Naive thymus-derived CD4-positive, alpha-beta T cell (primary cell): ENCODE measurements at regions of chr19 and their contacts with region 1.

Region 1: GRCh38 chr19:50025024-50025789 is at the start of gene VRK3:
- DNase-seq: peak; percentile 93 to 100 (median 99)
- ATAC-seq: peak; percentile 91
- H3K4me3 ChIP-seq: peak within 1 kb of the TSS; percentile 85
- H3K4me3 Mint-ChIP-seq: peak within 1 kb of the TSS; percentile 93 to 99 (median 94)
- H3K27ac ChIP-seq: peak within 1 kb of the TSS; percentile 96
- H3K27ac Mint-ChIP-seq: peak within 1 kb of the TSS; percentile 98 to 100 (median 99)
- H3K4me1 ChIP-seq: peaks cover 19 to 29% of the 10 kb centered on the region in 2 donors
- H3K4me1 Mint-ChIP-seq: peaks cover 30 to 73% (median 58%) of the 10 kb centered on the region in 7 donors
- H3K27me3 ChIP-seq: no peaks in the 10 kb centered on the region
- H3K27me3 Mint-ChIP-seq: peaks cover 0 to 6% (median 0%) of the 10 kb centered on the region in 5 donors
- total RNA-seq, gene VRK3: 70.6 to 121 (median 84.7) TPM

Region 2: DNA sequence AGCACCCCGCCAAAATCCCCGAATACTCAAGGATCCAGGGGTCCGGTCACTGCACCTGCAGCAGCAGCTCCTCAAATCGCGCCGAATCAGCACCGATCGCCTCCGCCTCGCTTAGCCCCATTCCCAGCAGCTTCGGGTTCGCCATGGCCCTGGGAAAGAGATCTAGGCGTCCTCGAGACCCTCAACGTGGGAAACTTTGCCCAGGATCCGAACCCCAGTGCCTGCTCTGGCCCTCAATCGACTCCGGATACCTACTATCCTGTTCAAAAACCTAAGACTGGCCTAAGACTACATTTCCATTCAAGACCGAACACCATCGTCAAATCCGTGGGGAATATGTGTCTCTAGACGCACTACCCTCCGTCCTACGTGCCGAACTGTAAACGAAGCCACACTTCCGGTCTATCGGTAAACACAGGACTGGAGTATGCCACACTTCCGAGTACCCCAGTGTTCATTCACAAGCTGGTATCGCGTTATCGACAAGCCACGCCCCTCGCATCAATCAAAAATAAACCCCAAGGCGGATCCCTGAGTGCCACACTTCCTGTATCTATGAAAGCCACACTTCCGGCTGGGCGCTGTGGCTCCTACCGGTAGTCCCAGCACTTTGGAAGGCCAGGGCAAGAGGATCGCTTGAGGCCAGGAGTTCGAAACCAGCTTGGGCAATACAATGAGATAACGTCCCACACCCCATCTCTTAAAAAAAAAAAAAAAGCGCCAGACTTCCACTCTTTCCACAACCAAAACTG is 573.6 kb before region 1 on chr19 and contains the start of gene PIH1D1:
- CTCF ChIA-PET with region 1: no interaction called
- POLR2A ChIA-PET with region 1: no interaction called
- intact Hi-C with region 1: loop called in 1 of 2 experiments (anchors 5 kb)
- DNase-seq: peak; percentile 69 to 97 (median 94)
- ATAC-seq: peak; percentile 71
- H3K4me3 ChIP-seq: peak within 1 kb of the TSS; percentile 85
- H3K4me3 Mint-ChIP-seq: peak within 1 kb of the TSS; percentile 95 to 100 (median 99)
- H3K27ac ChIP-seq: peak within 1 kb of the TSS; percentile 95
- H3K27ac Mint-ChIP-seq: peak within 1 kb of the TSS; percentile 92 to 100 (median 99)
- H3K4me1 ChIP-seq: peaks cover 15 to 26% of the 10 kb centered on the region in 2 donors
- H3K4me1 Mint-ChIP-seq: peaks cover 31 to 68% (median 55%) of the 10 kb centered on the region in 7 donors
- H3K27me3 ChIP-seq: no peaks in the 10 kb centered on the region
- H3K27me3 Mint-ChIP-seq: no peaks in the 10 kb centered on the region
- total RNA-seq, gene PIH1D1: 136 to 183 (median 159) TPM

Region 3: DNA sequence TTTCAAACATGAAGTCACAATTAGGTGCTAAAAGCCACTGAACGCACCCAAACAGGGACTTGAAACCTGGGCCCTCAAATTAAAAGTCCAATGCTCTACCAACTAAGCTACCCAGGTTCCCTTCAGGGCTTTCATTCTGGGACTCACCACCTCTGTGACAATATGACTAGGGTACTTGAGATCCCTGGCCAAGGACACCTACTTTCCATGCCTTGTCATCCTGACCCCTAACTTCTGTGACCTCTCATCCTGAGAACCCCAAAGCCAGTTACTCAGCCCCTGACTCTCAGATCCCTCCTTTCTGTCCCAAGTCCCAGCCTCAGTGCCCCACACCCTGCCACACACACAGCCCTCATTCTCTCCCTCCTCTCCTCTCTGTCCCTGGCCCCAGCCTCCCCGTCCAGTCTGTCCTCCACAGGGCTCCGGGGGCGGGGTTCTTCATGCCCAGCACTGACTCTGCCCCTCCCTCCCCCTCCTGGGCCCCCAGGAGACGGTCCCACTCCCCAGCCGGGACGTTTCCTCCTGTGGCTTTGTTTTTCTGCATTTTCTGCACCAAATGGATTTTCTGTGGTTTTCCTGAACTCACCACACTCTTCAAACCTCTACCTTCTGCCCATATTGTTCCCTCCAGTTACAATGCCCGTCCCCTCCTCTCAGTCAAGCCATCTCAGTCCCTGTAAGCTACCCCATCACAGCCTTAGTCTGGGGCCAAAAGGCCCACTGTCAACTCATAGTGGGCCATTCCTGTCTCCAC is 490.4 kb before region 1 on chr19:
- CTCF ChIA-PET with region 1: no interaction called
- POLR2A ChIA-PET with region 1: no interaction called
- intact Hi-C with region 1: no loop called
- DNase-seq: peak in 1 of 9 donors; percentile 32
- ATAC-seq: no peak
- H3K4me3 ChIP-seq: peak overlapping the region; percentile 58
- H3K4me3 Mint-ChIP-seq: peak overlapping the region; percentile 77 to 95 (median 91)
- H3K27ac ChIP-seq: peak overlapping the region; percentile 66
- H3K27ac Mint-ChIP-seq: peak overlapping the region; percentile 41 to 95 (median 72)
- H3K4me1 ChIP-seq: peaks cover 12 to 21% of the 10 kb centered on the region in 2 donors
- H3K4me1 Mint-ChIP-seq: peaks cover 19 to 28% (median 22%) of the 10 kb centered on the region in 7 donors
- H3K27me3 ChIP-seq: no peaks in the 10 kb centered on the region
- H3K27me3 Mint-ChIP-seq: peaks cover 0 to 2% (median 0%) of the 10 kb centered on the region in 5 donors

Region 4: DNA sequence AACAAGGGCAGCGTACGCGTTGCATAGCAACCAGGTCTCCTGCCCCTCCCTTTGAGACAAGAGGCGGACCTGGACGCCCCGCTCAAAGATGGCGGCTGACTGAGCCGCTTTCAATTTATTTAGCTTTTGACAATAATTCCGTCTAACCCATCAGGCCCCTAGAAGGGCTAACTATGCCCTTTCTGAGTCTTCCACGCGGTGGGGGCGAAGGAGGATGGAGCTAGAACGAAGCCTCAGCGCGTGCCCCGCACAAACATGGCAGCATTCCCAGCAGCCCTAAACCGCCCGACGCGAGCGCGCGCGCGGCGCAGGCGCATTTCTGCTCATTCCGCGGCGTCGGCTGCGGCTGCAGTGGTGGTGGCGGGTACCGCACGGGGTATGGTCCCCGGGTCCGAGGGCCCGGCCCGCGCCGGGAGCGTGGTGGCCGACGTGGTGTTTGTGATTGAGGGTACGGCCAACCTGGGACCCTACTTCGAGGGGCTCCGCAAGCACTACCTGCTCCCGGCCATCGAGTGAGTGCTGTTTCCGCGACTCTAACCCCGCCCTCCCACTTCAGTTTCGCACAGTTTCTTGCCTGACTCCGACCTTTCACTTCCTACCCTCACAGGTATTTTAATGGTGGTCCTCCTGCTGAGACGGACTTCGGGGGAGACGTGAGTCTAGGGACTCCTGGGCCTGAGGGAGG is 207.1 kb before region 1 on chr19 and contains the start of gene MED25:
- CTCF ChIA-PET with region 1: no interaction called
- POLR2A ChIA-PET with region 1: no interaction called
- intact Hi-C with region 1: loop called (anchors 1 kb)
- DNase-seq: peak; percentile 87 to 96 (median 94)
- ATAC-seq: peak; percentile 65
- H3K4me3 ChIP-seq: peak within 1 kb of the TSS; percentile 91
- H3K4me3 Mint-ChIP-seq: peak within 1 kb of the TSS; percentile 94 to 100 (median 98)
- H3K27ac ChIP-seq: peak within 1 kb of the TSS; percentile 88
- H3K27ac Mint-ChIP-seq: peak within 1 kb of the TSS; percentile 96 to 100 (median 100)
- H3K4me1 ChIP-seq: peaks cover 11 to 17% of the 10 kb centered on the region in 2 donors
- H3K4me1 Mint-ChIP-seq: peaks cover 20 to 51% (median 39%) of the 10 kb centered on the region in 7 donors
- H3K27me3 ChIP-seq: no peaks in the 10 kb centered on the region
- H3K27me3 Mint-ChIP-seq: no peaks in the 10 kb centered on the region
- total RNA-seq, gene MED25: 36.8 to 75.2 (median 55.4) TPM

Region 5: DNA sequence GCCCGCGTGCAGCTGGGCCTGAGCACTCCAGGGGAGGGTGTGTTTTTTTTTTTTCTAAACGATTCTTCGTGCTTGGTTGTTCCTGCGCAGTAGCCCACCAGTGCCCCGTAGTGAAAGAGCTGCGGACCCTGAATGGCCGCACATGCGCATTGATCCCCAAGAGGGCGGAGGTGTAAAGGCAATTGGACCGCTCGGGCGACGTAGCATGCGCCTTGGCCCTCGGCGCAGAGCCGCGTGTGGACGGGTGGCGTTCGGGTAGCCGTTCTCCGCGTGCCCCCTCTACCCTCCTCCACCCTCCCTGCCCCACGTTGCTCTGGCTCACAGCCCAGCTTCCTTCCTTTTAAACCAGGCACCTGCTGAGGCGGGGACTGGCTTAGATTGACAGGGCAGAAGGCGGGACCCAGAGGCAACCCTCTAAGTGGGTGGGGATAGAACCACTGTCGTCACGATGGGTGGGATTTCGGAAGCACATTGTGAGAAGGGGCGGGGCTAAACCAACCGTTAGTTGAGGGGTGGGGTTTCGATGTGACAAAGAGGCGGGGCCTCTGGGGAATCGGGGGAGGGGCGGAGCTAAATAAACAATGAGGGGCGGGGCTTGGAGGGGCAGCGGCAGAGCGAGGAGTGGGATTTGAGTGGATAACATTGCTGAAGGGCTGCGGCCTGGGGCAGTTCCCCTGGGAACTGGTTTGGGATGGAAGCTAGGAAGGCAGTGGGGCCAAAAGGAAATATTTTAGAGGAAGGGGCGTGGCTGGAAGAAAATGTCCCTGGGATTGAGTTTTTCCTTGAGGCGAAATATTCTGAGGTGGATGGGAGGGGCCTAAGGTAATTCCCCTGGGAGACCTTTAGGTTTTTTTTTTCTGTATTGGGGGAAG is 95.4 kb before region 1 on chr19:
- CTCF ChIA-PET with region 1: no interaction called
- POLR2A ChIA-PET with region 1: interaction called, 7 read pairs
- intact Hi-C with region 1: loop called (anchors 1 kb)
- DNase-seq: peak in 8 of 9 donors; percentile 88 to 97 (median 96)
- ATAC-seq: peak; percentile 92
- H3K4me3 ChIP-seq: peak overlapping the region; percentile 100
- H3K4me3 Mint-ChIP-seq: peak overlapping the region; percentile 95 to 100 (median 97)
- H3K27ac ChIP-seq: peak overlapping the region; percentile 99
- H3K27ac Mint-ChIP-seq: peak overlapping the region; percentile 96 to 99 (median 97)
- H3K4me1 ChIP-seq: peaks cover 34 to 35% of the 10 kb centered on the region in 2 donors
- H3K4me1 Mint-ChIP-seq: peaks cover 46 to 76% (median 68%) of the 10 kb centered on the region in 7 donors
- H3K27me3 ChIP-seq: no peaks in the 10 kb centered on the region
- H3K27me3 Mint-ChIP-seq: peaks cover 0 to 3% (median 0%) of the 10 kb centered on the region in 5 donors

Region 6: DNA sequence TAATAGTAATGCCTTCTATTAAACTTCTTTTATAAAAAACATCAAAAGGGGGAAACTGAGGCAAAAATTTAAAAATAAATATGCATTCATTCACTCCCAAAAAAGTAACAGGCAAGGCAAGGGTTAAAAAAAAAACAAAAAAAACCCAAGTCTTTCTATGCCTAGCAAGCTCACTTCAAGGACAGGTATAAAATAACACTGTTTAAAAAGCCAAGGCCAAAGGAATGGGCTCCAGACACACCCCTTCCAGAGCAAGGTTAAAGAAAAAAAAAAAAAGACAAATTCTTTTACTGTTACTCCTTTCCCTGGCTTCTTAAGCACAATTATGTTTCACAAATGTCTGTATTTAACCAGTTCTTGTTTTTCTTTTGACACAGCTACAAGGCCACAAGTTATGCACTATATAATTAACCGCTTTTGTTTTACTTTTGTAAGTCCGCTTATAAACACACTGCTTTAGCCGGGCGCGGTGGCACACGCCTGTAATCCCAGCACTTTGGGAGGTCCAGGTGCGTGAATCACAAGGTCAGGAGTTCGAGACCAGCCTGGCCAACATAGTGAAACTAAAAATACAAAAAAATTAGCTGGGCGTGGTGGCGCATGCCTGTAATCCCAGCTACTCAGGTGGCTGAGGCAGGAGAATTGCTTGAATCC is 67.8 kb before region 1 on chr19:
- CTCF ChIA-PET with region 1: no interaction called
- POLR2A ChIA-PET with region 1: no interaction called
- intact Hi-C with region 1: no loop called
- DNase-seq: no peak
- ATAC-seq: no peak
- H3K4me3 ChIP-seq: no peak overlapping the region
- H3K4me3 Mint-ChIP-seq: no peak overlapping the region
- H3K27ac ChIP-seq: no peak overlapping the region
- H3K27ac Mint-ChIP-seq: no peak overlapping the region
- H3K4me1 ChIP-seq: no peaks in the 10 kb centered on the region
- H3K4me1 Mint-ChIP-seq: peaks cover 0 to 12% (median 8%) of the 10 kb centered on the region in 7 donors
- H3K27me3 ChIP-seq: no peaks in the 10 kb centered on the region
- H3K27me3 Mint-ChIP-seq: peaks cover 0 to 25% (median 8%) of the 10 kb centered on the region in 5 donors

Region 7: DNA sequence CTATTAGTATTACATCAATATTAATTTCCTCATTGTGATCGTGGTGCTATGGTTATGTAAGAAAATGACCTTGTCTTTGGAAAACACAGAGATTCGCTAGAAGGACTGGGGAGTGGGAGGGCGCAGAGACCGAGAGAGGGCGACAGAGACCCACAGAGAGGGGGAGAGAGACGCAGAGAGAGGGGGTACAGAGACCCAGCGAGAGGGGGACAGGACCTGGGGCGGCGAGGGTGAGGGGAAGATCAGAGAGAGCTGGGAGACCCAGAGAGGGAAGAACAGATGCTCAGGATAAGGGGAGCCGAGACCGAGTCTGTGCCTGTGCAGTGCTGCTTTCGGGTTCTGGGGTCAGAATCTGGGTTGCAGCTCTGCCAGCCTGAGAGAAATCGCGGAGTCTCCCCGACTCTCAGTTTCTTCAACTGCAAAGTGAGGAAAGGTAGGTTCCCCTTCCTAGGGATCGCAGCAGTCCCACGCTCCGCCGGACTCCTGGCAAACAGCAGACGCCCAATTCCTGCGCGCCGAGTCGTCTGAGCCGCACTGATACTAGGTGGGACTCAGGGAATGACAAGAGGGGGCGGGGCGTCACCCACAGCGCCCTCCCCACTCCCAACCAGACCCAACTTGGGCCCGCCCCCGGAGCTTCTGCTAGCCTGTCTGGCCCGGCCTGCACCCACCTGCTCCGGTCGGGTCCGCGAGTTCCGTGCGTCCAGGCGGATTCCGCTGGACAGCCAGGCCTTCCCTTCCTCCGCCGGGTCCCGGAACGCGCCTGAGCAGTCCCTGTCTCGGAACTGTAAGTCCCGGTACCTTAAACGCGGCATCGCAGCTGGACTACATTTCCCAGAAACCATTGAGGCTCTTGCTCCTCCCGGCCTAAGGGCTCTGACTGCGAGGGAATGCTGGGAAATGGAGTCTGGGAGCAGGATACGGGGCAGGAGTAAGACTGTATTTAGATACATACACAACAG is 122.5 kb after region 1 on chr19:
- CTCF ChIA-PET with region 1: no interaction called
- POLR2A ChIA-PET with region 1: interaction called, 8 read pairs
- intact Hi-C with region 1: loop called in 1 of 2 experiments (anchors 1 kb)
- DNase-seq: peak; percentile 37 to 80 (median 72)
- ATAC-seq: peak; percentile 91
- H3K4me3 ChIP-seq: peak overlapping the region; percentile 63
- H3K4me3 Mint-ChIP-seq: peak overlapping the region; percentile 74 to 97 (median 87)
- H3K27ac ChIP-seq: peak overlapping the region; percentile 53
- H3K27ac Mint-ChIP-seq: peak overlapping the region in 8 of 9 donors; percentile 0 to 62 (median 36)
- H3K4me1 ChIP-seq: no peaks in the 10 kb centered on the region
- H3K4me1 Mint-ChIP-seq: peaks cover 6 to 12% (median 9%) of the 10 kb centered on the region in 7 donors
- H3K27me3 ChIP-seq: peaks cover 0 to 3% of the 10 kb centered on the region in 2 donors
- H3K27me3 Mint-ChIP-seq: peaks cover 14 to 23% (median 20%) of the 10 kb centered on the region in 5 donors

Region 8: DNA sequence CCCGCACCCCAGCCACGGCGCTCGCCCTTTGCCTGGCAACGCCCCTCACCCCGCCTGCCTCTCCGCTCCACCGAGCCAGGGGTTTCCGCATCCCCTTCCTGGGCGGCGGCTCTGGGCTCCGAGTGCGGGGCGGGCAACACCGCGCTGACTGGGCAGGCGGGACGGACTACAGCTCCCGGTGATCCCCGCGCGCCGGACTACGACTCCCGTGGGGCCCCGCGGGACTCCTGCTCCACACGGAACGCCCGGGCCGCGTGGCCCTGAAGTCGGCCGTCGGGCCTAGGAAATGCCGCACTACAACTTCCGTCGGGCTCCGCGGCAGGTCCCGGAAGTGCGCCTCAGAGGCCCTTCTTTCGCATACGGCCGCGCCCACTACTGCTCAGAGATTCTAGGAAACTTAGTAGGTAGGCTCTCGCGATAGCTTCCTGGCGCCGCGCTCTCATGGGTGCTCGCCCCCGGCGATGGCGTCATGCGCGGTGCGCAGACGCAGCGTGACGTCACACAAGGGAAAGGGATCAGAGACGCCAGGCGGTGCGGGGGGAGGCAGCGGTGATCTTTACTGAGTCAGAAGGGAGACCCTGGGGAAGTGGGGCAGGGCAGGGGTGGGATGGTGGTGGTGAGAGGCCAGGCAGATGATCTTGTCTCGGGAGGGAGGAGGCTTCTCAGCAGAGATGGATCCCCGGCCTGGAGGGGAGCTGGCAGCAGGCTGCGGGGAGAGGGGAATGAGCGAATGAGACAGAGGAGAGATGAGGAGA is 486.0 kb after region 1 on chr19 and contains the start of gene JOSD2:
- CTCF ChIA-PET with region 1: no interaction called
- POLR2A ChIA-PET with region 1: no interaction called
- intact Hi-C with region 1: loop called in 1 of 2 experiments (anchors 1 kb)
- DNase-seq: peak; percentile 89 to 99 (median 96)
- ATAC-seq: peak; percentile 94
- H3K4me3 ChIP-seq: peak within 1 kb of the TSS; percentile 75
- H3K4me3 Mint-ChIP-seq: peak within 1 kb of the TSS; percentile 75 to 97 (median 88)
- H3K27ac ChIP-seq: peak within 1 kb of the TSS; percentile 86
- H3K27ac Mint-ChIP-seq: peak within 1 kb of the TSS; percentile 87 to 99 (median 97)
- H3K4me1 ChIP-seq: peaks cover 7 to 16% of the 10 kb centered on the region in 2 donors
- H3K4me1 Mint-ChIP-seq: peaks cover 0 to 27% (median 19%) of the 10 kb centered on the region in 7 donors
- H3K27me3 ChIP-seq: no peaks in the 10 kb centered on the region
- H3K27me3 Mint-ChIP-seq: peaks cover 0 to 16% (median 6%) of the 10 kb centered on the region in 5 donors
- total RNA-seq, gene JOSD2: 13.0 to 45.9 (median 22.7) TPM

Region 9: GRCh38 chr19:51108066-51108804 is 1083.0 kb after region 1 on chr19 and contains the start of gene CTU1:
- CTCF ChIA-PET with region 1: no interaction called
- POLR2A ChIA-PET with region 1: no interaction called
- intact Hi-C with region 1: loop called (anchors 1 to 10 kb)
- DNase-seq: peak; percentile 93 to 99 (median 98)
- ATAC-seq: peak; percentile 99
- H3K4me3 ChIP-seq: peak within 1 kb of the TSS; percentile 92
- H3K4me3 Mint-ChIP-seq: peak within 1 kb of the TSS; percentile 90 to 100 (median 98)
- H3K27ac ChIP-seq: peak within 1 kb of the TSS; percentile 77
- H3K27ac Mint-ChIP-seq: peak within 1 kb of the TSS; percentile 92 to 99 (median 97)
- H3K4me1 ChIP-seq: peaks cover 13% of the 10 kb centered on the region in 2 donors
- H3K4me1 Mint-ChIP-seq: peaks cover 28 to 48% (median 42%) of the 10 kb centered on the region in 7 donors
- H3K27me3 ChIP-seq: no peaks in the 10 kb centered on the region
- H3K27me3 Mint-ChIP-seq: no peaks in the 10 kb centered on the region
- total RNA-seq, gene CTU1: 3.3 to 11.8 (median 10.5) TPM